ENCODE measurements at regions of chr18 and their contacts with region 1.

Region 1: GRCh38 chr18:48879008-48879431 is 71.7 kb downstream of the SMAD7 start:
- DNase-seq: peak; percentile 77 to 86
- H3K4me3 ChIP-seq: peak overlapping the region; percentile 51
- H3K27ac ChIP-seq: peak overlapping the region; percentile 94
- H3K4me1 ChIP-seq: peaks cover 42% of the 10 kb centered on the region
- H3K27me3 ChIP-seq: no peaks in the 10 kb centered on the region
- CTCF ChIP-seq: no peak

Region 2: DNA sequence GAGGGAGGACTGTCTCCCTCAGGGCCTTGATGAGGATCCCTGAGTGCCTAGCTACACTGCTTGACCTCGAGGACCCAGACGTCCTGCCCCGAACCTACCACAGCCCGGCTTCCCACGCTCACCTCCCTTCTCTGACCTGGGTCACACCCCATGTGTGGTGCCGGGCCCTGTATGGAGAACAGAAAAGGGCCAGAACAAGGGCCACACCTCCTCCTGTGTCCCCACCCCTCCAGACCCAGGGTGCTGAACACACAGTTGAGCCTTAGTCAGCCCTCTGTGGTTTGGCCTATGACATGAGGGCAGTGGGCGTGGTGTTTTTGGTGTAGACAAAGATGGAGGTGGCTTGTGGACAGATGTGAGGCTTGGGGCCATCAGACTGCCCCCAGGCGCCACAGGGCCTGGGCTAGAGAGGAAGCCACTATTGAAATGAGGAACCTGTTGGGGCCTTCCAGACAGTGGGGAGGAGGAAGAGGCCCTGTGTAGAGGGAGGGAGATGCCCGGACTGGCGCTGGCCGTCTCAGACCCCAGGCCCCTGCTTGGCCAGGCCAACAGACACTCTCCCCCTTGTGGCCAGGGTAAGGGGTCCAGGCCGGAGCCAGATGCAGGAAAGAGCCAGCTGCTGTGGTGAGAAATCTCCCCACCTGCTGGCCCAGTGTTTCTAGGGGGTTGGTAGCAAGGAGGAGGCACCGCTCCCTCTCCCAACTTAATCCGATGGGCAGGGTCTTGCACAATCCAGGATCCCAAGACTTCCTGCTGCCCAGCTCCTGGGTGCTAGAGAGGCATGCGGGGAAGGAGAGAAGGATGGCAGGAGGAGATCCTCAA is 17.9 kb after region 1 on chr18:
- CTCF ChIA-PET with region 1: no interaction called
- POLR2A ChIA-PET with region 1: no interaction called
- intact Hi-C with region 1: loop called (anchors 2 kb)
- DNase-seq: peak; percentile 85 to 93
- H3K4me3 ChIP-seq: no peak overlapping the region
- H3K27ac ChIP-seq: peak overlapping the region; percentile 43
- H3K4me1 ChIP-seq: peaks cover 30% of the 10 kb centered on the region
- H3K27me3 ChIP-seq: no peaks in the 10 kb centered on the region
- CTCF ChIP-seq: no peak; the same call in 1 of the 2 replicates

Measured in PC-9 (cell line).